Left cardiac atrium (tissue), 4 donors: ENCODE measurements at regions of chr10 and their contacts with region 1.

Region 1: GRCh38 chr10:97543025-97543575 is 29.5 kb upstream of the ANKRD2 start:
- DNase-seq: peak; percentile 90
- ATAC-seq: peak; percentile 75 to 92

Region 2: GRCh38 chr10:97498076-97498840 is 44.8 kb before region 1 on chr10 and contains the start of gene MMS19:
- intact Hi-C with region 1: loop called in 1 of 2 experiments (anchors 10 kb)
- DNase-seq: peak; percentile 100
- ATAC-seq: peak; percentile 91 to 96
- total RNA-seq, gene MMS19: 31.9 to 34.0 TPM

Region 3: GRCh38 chr10:97612386-97612785 is 69.3 kb after region 1 on chr10:
- intact Hi-C with region 1: no loop called
- DNase-seq: no peak
- ATAC-seq: peak; percentile 60 to 73

Region 4: GRCh38 chr10:97861097-97861750 is 318.1 kb after region 1 on chr10:
- intact Hi-C with region 1: no loop called
- DNase-seq: no peak
- ATAC-seq: peak in 1 of 2 donors; percentile 94

Region 5: GRCh38 chr10:97961979-97962378 is 418.9 kb after region 1 on chr10:
- intact Hi-C with region 1: no loop called
- DNase-seq: no peak
- ATAC-seq: no peak